ENCODE measurements at regions of chr14 and their contacts with region 1.

Region 1: GRCh38 chr14:92585981-92586937 is 72.7 kb downstream of the RIN3 start:
- DNase-seq: peak in 7 of 9 experiments; percentile 26 to 90 (median 62)
- ATAC-seq: peak; percentile 75
- H3K4me3 ChIP-seq: peak overlapping the region; percentile 9 to 38
- H3K4me3 Mint-ChIP-seq: peak overlapping the region; percentile 74
- H3K27ac ChIP-seq: peak overlapping the region; percentile 22 to 85
- H3K27ac Mint-ChIP-seq: peak overlapping the region; percentile 95
- H3K4me1 ChIP-seq: peaks cover 98% of the 10 kb centered on the region
- H3K4me1 Mint-ChIP-seq: peaks cover 97% of the 10 kb centered on the region
- H3K27me3 ChIP-seq: no peaks in the 10 kb centered on the region
- H3K27me3 Mint-ChIP-seq: no peaks in the 10 kb centered on the region
- CTCF ChIP-seq: no peak

Region 2: DNA sequence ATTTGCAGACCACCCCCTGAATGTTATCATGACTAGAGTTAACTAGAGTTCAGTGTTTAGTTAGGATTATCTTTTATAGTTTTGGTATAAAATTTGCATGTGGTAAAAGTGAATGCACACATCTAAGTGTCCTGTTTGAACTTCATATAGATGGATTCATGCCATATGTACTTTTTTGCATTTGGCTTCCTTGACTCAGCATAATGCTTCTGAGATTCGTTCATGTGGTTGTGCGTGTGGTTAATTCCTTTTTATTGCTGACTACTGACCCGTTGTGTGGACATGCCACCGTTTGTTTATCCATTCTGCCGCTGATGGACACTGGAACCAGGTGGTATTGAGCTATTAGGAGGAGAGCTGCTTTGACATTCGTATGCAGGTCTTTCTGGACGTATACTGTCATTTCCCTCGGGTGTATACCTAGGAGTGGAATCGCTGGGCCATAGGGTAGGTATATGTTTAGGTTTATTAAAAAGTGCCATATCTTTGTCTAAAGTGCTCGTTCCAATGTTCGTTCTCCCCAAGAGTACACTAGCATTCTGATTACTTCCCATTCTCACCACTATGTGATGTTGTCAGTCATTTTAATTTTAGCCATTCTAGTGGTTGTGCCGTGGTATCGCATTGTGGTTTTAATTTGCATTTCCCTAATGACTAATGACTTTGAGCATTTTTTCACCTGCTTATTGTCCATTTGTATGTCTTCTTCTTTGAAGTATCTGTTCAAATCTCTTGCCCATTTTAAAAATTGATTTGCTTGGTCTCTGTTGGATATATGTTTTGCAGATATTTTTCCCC is 35.0 kb before region 1 on chr14:
- CTCF ChIA-PET with region 1: interaction called, 4 read pairs
- POLR2A ChIA-PET with region 1: interaction called, 6 read pairs
- intact Hi-C with region 1: loop called (anchors 1 to 5 kb)
- DNase-seq: peak in 2 of 9 experiments; percentile 67 to 82
- ATAC-seq: peak; percentile 57
- H3K4me3 ChIP-seq: no peak overlapping the region
- H3K4me3 Mint-ChIP-seq: no peak overlapping the region
- H3K27ac ChIP-seq: peak overlapping the region in 1 of 2 experiments; percentile 27
- H3K27ac Mint-ChIP-seq: peak overlapping the region; percentile 50
- H3K4me1 ChIP-seq: peaks cover 59% of the 10 kb centered on the region
- H3K4me1 Mint-ChIP-seq: peaks cover 74% of the 10 kb centered on the region
- H3K27me3 ChIP-seq: no peaks in the 10 kb centered on the region
- H3K27me3 Mint-ChIP-seq: no peaks in the 10 kb centered on the region
- CTCF ChIP-seq: peak; percentile 35

Region 3: DNA sequence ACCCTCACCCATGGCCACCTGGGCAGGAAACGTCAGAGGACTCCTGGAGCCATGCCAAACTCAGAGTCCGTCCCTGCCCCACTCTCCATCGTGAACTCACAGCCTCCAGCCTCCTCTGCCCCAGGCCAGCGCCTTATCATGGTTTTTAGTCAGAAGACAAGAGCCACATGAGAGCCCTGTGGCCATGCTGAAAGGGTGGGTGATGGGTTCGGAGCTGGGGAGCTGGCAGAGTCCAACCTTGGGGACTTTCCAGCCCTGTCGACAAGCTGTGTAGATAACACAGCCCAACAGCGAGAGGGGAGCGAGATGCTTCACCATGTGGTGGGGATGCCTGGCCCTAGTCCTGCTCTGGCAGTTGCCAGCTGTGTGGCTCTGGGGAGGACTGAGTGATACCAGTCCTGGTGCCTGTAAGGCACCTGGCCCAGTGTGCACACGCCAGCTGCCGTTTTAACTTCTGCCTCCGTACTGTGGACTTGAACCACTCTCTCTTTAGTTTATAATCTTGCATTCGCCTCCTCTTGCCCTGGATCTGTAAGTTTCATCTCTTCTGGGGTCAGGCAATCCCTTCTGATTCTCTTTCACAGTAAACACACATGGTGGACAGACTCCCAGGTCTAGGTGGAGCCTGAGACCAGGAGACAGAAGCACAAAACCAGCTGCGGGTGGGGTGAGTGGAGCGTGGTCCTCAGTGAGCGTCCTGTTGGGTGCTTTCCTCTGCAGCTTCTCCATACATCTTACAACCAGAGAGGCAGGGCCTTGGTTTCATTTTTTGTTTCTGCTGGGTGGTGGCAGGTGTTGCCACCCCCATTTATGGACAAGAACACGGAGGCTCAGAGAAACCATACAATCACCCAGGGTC is 17.4 kb before region 1 on chr14:
- CTCF ChIA-PET with region 1: interaction called, 12 read pairs
- POLR2A ChIA-PET with region 1: interaction called, 11 read pairs
- intact Hi-C with region 1: no loop called
- DNase-seq: peak in 6 of 9 experiments; percentile 46 to 90 (median 68)
- ATAC-seq: peak; percentile 80
- H3K4me3 ChIP-seq: peak overlapping the region; percentile 12 to 17
- H3K4me3 Mint-ChIP-seq: peak overlapping the region; percentile 83
- H3K27ac ChIP-seq: peak overlapping the region; percentile 17 to 91
- H3K27ac Mint-ChIP-seq: peak overlapping the region; percentile 99
- H3K4me1 ChIP-seq: peaks cover 30% of the 10 kb centered on the region
- H3K4me1 Mint-ChIP-seq: peaks cover 67% of the 10 kb centered on the region
- H3K27me3 ChIP-seq: no peaks in the 10 kb centered on the region
- H3K27me3 Mint-ChIP-seq: no peaks in the 10 kb centered on the region
- CTCF ChIP-seq: no peak

Region 4: GRCh38 chr14:92612988-92613658 is 26.9 kb after region 1 on chr14:
- CTCF ChIA-PET with region 1: interaction called, 8 read pairs
- POLR2A ChIA-PET with region 1: interaction called, 3 read pairs
- intact Hi-C with region 1: loop called in 1 of 2 experiments (anchors 2 kb)
- DNase-seq: peak; percentile 35 to 82 (median 72)
- ATAC-seq: peak; percentile 30
- H3K4me3 ChIP-seq: no peak overlapping the region
- H3K4me3 Mint-ChIP-seq: no peak overlapping the region
- H3K27ac ChIP-seq: no peak overlapping the region
- H3K27ac Mint-ChIP-seq: peak overlapping the region; percentile 49
- H3K4me1 ChIP-seq: peaks cover 50% of the 10 kb centered on the region
- H3K4me1 Mint-ChIP-seq: peaks cover 66% of the 10 kb centered on the region
- H3K27me3 ChIP-seq: no peaks in the 10 kb centered on the region
- H3K27me3 Mint-ChIP-seq: no peaks in the 10 kb centered on the region
- CTCF ChIP-seq: peak; percentile 94

Measured in CD8-positive, alpha-beta T cell (primary cell).